ENCODE measurements at regions of chr12 and their contacts with region 1.

Region 1: DNA sequence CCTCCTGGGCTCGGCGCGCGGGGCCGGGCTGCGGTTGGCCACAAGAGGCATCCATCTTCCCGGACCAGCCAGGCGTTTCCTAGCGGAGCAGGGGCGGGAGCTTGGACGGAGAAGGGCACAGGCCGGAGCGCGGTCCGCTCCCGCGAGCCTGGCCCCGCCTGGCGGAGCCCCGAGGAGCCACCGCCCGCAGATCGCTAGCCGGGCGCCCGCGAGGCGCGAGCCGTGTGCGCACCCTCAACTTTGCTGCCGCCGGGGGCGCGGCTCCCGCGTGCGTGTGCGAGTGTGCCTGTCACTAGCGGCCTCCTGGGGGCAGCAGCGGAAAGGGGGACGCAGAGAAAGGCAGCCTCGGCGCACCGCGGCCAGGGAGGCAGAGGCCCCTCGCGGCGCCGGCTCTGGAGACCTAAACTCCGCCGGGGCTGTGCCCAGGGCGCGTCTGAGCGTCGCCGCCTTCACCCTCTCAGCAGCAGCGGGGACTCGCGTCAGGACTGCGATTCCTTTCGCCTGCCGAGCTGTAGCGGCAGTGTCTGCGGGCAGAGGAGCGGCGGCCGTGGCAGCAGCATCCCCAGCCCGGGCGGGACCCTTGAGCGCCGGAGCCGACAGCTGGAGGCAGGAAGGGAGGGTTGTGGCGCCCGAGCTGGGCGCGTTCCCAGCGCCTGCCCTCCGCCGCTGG is 644 bp upstream of the SRGAP1 start:
- DNase-seq: peak; percentile 94
- H3K4me3 ChIP-seq: peak overlapping the region; percentile 39 to 96 (median 73)
- H3K27ac ChIP-seq: peak overlapping the region; percentile 64 to 93 (median 89)
- H3K4me1 ChIP-seq: peaks cover 3 to 54% (median 23%) of the 10 kb centered on the region in 6 donors
- H3K27me3 ChIP-seq: peaks cover 0 to 28% (median 4%) of the 10 kb centered on the region in 7 donors
- CTCF ChIP-seq: peak; percentile 57 to 97 (median 89)
- POLR2A ChIP-seq: no peak

Region 2: GRCh38 chr12:64181504-64182291 is 337.8 kb after region 1 on chr12:
- intact Hi-C with region 1: loop called (anchors 5 kb)
- DNase-seq: no peak
- H3K4me3 ChIP-seq: no peak overlapping the region
- H3K27ac ChIP-seq: peak overlapping the region in 7 of 8 donors; percentile 21 to 56 (median 42)
- H3K4me1 ChIP-seq: peaks cover 7 to 24% (median 15%) of the 10 kb centered on the region in 6 donors
- H3K27me3 ChIP-seq: no peaks in the 10 kb centered on the region
- CTCF ChIP-seq: peak in 9 of 11 experiments; percentile 14 to 57 (median 43)
- POLR2A ChIP-seq: no peak

Region 3: DNA sequence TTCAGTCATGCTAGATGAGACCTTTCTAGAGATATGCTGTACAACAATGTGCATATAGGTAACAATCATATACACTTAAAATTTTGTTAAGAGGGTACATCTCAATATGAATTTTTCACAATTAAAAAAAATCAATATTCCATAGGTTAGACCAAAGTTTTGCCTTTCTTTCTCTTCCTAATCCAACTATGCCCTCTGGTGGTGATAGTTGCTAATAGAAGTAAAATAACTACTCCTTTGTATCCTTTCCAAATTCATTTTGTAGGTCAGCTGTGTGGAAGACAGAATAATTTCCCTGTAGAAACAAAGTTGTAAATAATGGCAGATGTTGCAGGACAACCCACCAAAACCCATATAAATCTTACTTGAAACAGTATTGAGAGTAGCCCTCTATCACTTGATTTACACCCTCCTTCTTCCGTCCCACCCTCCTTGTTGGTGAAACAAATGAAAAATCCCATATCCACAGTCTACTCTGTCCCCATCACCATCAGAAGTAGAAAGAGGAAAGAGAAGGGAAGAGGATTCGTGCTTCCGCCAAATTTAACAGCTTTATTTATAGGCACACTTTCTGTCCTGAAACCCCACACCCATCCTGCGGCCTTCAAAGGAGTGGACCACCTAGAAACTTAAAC is 412.4 kb after region 1 on chr12:
- intact Hi-C with region 1: loop called (anchors 5 kb)
- DNase-seq: no peak
- H3K4me3 ChIP-seq: no peak overlapping the region
- H3K27ac ChIP-seq: no peak overlapping the region
- H3K4me1 ChIP-seq: peaks cover 0 to 16% (median 0%) of the 10 kb centered on the region in 6 donors
- H3K27me3 ChIP-seq: no peaks in the 10 kb centered on the region
- CTCF ChIP-seq: peak in 10 of 11 experiments; percentile 38 to 71 (median 65)
- POLR2A ChIP-seq: no peak

Measured in spleen (tissue), 13 donors.